ENCODE measurements at regions of chr16 and their contacts with region 1.

Region 1: GRCh38 chr16:6125483-6126259 is 1028.1 kb upstream of the EEF2KMT start:
- DNase-seq: no peak
- ATAC-seq: no peak
- H3K4me3 ChIP-seq: no peak overlapping the region
- H3K4me3 Mint-ChIP-seq: no peak overlapping the region
- H3K27ac ChIP-seq: no peak overlapping the region
- H3K27ac Mint-ChIP-seq: no peak overlapping the region
- H3K4me1 ChIP-seq: no peaks in the 10 kb centered on the region
- H3K4me1 Mint-ChIP-seq: no peaks in the 10 kb centered on the region
- H3K27me3 ChIP-seq: no peaks in the 10 kb centered on the region
- H3K27me3 Mint-ChIP-seq: no peaks in the 10 kb centered on the region
- CTCF ChIP-seq: no peak

Region 2: GRCh38 chr16:6096931-6097670 is 28.6 kb before region 1 on chr16:
- intact Hi-C with region 1: no loop called
- DNase-seq: no peak
- ATAC-seq: no peak
- H3K4me3 ChIP-seq: no peak overlapping the region
- H3K4me3 Mint-ChIP-seq: no peak overlapping the region
- H3K27ac ChIP-seq: no peak overlapping the region
- H3K27ac Mint-ChIP-seq: no peak overlapping the region
- H3K4me1 ChIP-seq: no peaks in the 10 kb centered on the region
- H3K4me1 Mint-ChIP-seq: no peaks in the 10 kb centered on the region
- H3K27me3 ChIP-seq: no peaks in the 10 kb centered on the region
- H3K27me3 Mint-ChIP-seq: no peaks in the 10 kb centered on the region
- CTCF ChIP-seq: no peak

Region 3: GRCh38 chr16:6189216-6189615 is 63.5 kb after region 1 on chr16:
- intact Hi-C with region 1: loop called (anchors 10 kb)
- DNase-seq: no peak
- ATAC-seq: no peak
- H3K4me3 ChIP-seq: no peak overlapping the region
- H3K4me3 Mint-ChIP-seq: no peak overlapping the region
- H3K27ac ChIP-seq: no peak overlapping the region
- H3K27ac Mint-ChIP-seq: no peak overlapping the region
- H3K4me1 ChIP-seq: no peaks in the 10 kb centered on the region
- H3K4me1 Mint-ChIP-seq: no peaks in the 10 kb centered on the region
- H3K27me3 ChIP-seq: no peaks in the 10 kb centered on the region
- H3K27me3 Mint-ChIP-seq: no peaks in the 10 kb centered on the region
- CTCF ChIP-seq: no peak